ENCODE measurements at regions of chr12 and their contacts with region 1.

Region 1: DNA sequence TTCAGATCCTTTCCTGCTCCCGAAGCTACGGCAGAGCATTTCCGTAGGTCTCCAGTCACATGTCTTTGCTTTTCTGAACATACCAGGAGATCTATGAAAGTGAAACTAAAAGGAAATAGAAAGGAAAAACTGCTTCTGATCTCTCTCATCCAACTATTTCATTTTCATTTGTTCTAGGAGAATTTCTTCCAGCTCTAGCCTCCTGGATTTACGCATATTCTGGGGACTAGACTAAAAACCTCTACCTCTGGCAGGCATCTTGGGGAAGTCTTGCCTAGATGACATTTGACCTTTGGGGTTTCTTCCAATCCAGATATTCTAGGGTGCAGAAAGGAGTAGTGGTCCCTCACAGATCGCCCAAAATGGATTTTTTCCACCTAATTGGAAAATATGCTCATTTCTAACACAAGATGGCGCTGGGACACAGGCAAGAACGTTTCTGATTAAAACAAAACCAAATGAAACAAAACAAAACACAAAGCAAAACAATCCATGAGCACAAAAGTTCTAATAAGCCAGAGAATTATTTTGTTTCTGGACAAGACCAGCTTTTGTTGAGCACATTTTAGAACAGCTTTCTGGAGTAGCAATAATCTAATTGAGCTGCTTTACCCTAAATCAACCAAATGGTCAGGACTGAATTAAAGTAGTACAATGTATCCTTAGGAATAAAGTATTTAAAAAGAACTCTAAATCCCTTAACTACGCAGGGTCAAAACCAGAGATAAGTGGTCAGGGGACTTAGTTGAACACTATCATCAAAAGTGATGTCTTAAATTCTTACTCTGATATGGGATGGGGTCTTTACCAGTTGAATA is 12.3 kb upstream of the PARP11 start:
- DNase-seq: peak; percentile 8
- H3K4me3 ChIP-seq: peak overlapping the region; percentile 59
- H3K27ac ChIP-seq: no peak overlapping the region
- H3K27me3 ChIP-seq: peaks cover 14% of the 10 kb centered on the region
- CTCF ChIP-seq: peak; percentile 86

Region 2: DNA sequence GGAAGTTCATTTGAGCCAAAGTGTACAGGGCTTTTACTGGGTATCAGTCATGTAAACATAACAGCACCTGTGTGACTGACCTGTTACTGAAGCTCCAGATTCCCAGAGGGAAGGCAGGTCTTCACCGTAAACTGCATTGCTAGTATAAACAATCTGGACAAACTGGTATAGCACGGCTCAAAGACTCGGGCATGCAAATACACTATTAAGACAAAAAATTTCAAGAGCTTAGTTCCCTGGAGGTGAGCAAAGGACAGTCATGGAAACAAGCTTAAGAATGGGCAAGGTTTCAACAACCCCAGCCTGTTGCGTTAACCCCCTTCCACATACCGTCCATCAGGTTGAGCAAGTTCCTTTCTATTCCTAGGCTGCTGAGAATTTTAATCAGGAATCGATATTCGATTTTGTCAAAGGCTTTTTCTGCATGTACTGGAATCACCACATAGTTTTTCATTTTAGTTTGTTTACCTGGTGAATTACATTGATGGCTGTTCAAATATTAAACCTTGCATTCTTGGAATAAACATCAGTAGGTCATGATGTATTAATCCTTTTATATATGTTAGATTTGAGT is 21.6 kb before region 1 on chr12:
- CTCF ChIA-PET with region 1: interaction called, 10 read pairs
- POLR2A ChIA-PET with region 1: no interaction called
- DNase-seq: no peak
- H3K4me3 ChIP-seq: no peak overlapping the region
- H3K27ac ChIP-seq: no peak overlapping the region
- H3K27me3 ChIP-seq: no peaks in the 10 kb centered on the region
- CTCF ChIP-seq: no peak

Region 3: DNA sequence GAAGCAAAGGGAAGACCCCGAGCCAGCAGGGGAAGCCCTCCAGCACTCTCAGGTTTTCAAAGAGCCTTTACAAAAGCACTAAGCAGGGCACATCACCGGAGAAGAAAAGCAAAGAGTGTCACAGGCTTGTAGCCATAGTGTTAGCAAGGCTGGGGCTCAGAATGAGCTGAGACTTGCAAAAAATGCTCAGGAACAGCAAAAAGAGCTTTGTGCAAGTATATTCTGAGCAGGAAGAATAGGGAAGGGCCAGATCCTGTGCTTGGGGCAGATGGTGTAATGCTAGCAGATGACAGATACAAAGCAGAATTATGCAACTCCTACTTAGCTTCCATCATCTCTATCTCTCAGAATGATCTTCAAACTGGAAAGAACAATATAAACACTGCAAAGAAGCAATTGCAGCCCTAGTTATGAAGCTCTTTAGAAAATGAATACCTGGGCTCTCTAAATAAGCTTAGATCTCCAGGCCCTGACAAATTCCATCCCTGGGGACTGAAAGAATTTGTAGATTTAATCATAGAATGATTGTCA is 11.4 kb after region 1 on chr12:
- CTCF ChIA-PET with region 1: interaction called, 10 read pairs
- POLR2A ChIA-PET with region 1: no interaction called
- DNase-seq: no peak
- H3K4me3 ChIP-seq: no peak overlapping the region
- H3K27ac ChIP-seq: no peak overlapping the region
- H3K27me3 ChIP-seq: no peaks in the 10 kb centered on the region
- CTCF ChIP-seq: no peak

Region 4: DNA sequence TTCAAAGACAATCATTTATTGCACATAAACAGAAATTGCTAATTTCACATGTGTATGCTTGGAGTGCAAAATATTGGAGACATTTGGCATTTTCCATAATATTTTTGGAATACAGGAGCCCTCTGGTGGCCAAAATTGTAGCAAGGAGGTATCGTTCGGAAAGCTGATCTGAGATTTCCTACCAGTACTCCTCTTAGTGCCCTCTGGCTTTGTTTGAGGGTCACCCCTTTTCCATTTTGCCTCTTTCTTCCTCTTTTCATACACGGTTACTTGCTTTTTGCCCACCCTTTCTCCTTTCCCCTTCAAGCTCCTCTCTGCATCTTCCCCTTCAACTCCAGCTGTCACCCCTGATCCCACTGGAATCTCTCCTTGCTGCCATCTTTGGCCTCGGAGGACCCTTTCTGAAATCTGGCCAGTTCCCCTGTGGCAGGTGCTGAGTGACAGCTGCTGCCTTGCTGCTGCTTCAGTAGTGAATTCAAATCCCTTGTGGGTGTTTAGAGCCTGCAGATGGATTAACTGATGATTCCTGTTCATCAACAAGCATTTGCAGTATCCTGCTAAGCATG is 152.3 kb after region 1 on chr12:
- CTCF ChIA-PET with region 1: interaction called, 156 read pairs
- POLR2A ChIA-PET with region 1: no interaction called
- DNase-seq: no peak
- H3K4me3 ChIP-seq: no peak overlapping the region
- H3K27ac ChIP-seq: no peak overlapping the region
- H3K27me3 ChIP-seq: peaks cover 15% of the 10 kb centered on the region
- CTCF ChIP-seq: peak; percentile 76

Region 5: DNA sequence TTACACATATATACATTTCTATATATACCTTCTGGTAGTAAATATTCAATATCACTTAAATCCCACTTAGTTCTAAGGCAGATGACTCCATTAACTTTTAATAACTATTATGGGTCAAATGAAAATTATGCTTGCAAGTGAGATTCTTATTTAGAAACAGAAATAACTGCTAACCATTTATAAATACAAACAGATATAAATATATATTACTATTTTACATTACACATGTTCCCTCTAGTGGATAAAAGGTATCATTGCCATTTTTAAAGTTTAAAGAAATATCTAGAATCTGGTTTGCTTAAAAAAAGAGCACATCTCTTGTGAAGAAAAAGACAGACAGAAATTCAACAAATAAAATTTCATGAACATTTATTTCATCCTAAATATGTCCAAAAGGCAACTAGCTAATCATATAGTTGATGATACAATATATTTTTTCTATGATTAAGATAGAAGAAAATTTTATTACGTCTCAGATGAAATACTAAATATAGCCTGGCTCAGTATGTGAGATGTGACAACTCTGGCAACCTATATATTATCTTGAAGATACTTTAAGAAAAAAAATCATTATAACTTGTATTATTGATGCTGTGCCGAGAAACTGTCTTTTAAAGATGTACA is 641.5 kb after region 1 on chr12:
- CTCF ChIA-PET with region 1: interaction called, 14 read pairs
- POLR2A ChIA-PET with region 1: no interaction called
- DNase-seq: no peak
- H3K4me3 ChIP-seq: no peak overlapping the region
- H3K27ac ChIP-seq: no peak overlapping the region
- H3K27me3 ChIP-seq: no peaks in the 10 kb centered on the region
- CTCF ChIP-seq: peak; percentile 54